PC-3 (cell line): ENCODE measurements at regions of chr19 and their contacts with region 1.

Region 1: DNA sequence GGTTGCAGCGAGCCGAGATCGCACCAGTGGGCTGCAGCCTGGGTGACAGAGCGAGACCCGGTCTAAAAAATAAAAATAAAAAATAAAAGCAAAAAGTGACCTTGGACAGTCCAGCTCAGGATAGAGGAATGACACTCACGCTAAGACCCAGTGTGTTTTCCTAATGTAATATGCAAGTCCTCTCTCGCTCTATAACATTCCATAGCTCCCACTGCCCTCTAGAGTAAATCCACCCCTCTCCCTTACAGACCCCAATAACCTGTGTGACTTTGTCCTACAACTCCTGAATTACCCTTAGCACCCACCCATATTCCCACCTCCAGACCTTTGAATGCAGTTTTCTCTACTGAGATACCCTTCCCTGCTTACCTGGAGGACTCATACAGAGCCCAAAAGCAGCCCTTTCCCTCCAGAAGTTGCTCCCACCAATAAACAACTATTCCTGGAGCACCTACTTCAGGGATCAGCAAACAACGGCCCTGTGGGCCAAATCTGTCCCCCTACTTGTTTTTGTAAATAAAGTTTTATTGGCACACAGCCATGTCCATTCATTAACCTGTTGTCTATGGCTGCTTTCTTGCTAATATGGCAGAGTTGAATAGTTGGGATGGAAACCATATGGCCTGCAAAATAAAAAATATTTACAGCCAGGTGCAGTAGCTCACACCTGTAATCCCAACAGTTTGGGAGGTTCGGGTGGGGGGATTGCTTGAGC is 39.8 kb upstream of the PTPRS start:
- DNase-seq: no peak
- ATAC-seq: no peak
- H3K4me3 ChIP-seq: no peak overlapping the region
- H3K27ac ChIP-seq: no peak overlapping the region
- H3K4me1 ChIP-seq: no peaks in the 10 kb centered on the region
- H3K27me3 ChIP-seq: no peaks in the 10 kb centered on the region
- CTCF ChIP-seq: no peak

Region 2: DNA sequence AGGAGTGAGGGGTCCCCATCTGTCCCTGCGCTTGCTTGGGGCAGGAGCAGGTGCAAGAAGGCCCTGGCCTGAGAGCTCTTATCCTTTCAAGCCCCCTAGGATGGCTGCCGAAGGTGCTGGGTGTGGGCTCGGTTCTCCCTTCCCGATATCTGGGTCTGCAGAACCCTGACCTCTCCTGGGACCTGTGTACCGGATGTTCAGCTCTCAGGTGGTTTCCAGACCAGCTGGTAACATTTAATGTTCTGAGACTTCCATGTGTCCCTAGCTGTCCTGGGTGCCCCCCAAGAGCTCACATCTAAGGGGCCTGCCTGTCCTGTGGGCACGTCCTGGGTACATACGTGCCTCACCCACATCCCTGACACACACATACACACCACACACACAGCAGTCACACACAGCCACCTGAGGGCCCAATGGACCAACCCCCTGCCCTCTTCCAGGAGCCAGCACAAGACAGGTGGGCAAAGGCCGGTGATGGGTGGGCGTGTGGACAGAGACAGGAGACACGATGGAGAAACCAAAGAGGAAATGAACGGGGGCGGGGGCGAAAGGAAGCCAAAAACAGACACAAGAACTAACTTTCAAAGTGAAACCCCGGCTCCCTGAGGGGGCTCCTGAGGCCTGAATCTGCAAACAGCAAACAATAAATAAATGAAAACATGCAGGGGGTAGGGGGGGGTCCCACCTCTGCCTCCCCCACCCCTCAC is 164.1 kb before region 1 on chr19:
- CTCF ChIA-PET with region 1: no interaction called
- POLR2A ChIA-PET with region 1: no interaction called
- intact Hi-C with region 1: no loop called
- DNase-seq: no peak
- ATAC-seq: no peak
- H3K4me3 ChIP-seq: no peak overlapping the region
- H3K27ac ChIP-seq: no peak overlapping the region
- H3K4me1 ChIP-seq: no peaks in the 10 kb centered on the region
- H3K27me3 ChIP-seq: no peaks in the 10 kb centered on the region
- CTCF ChIP-seq: no peak

Region 3: DNA sequence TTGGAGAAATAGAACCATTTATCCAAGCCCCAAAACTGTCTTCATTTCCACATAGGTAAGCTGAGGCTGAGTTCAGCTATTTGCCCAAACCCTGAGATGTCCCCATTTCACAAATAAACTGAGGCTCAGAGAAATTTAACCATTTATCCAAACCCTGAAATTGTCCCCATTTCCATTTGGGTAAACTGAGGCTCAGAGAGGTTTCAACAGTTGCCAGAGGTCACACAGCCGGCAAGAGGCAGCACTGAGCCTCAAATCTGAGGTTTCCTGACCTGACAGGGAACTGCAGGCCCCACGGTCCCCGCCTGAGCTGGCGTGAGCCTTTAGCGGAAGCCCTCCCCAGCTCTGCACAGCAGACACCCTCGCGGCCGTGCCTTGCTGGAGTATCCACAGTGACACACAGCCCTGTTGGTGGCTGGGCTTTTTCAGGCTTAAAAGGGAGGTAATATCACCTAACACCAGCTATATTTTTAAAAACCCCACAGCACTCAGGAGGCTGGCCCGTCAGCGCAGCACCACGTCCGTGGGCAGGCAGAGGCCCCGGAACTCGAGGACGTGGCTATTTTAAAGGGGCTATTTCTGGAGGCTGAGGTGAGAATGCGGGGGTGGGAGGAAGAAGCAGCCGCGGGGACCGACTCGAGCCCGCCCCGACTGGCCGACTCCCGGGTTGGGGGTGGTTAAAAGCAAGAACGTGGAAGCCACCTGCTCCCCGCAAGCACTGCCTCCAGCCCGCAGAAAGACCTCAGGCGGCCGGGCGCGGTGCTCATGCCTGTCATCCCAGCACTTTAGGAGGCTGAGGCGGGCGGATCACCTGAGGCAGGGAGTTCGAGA is 58.3 kb before region 1 on chr19:
- CTCF ChIA-PET with region 1: no interaction called
- POLR2A ChIA-PET with region 1: no interaction called
- intact Hi-C with region 1: no loop called
- DNase-seq: no peak
- ATAC-seq: no peak
- H3K4me3 ChIP-seq: no peak overlapping the region
- H3K27ac ChIP-seq: no peak overlapping the region
- H3K4me1 ChIP-seq: no peaks in the 10 kb centered on the region
- H3K27me3 ChIP-seq: no peaks in the 10 kb centered on the region
- CTCF ChIP-seq: no peak

Region 4: GRCh38 chr19:5394551-5395505 is 14.5 kb after region 1 on chr19:
- CTCF ChIA-PET with region 1: no interaction called
- POLR2A ChIA-PET with region 1: interaction called, 10 read pairs
- intact Hi-C with region 1: no loop called
- DNase-seq: no peak
- ATAC-seq: no peak
- H3K4me3 ChIP-seq: no peak overlapping the region
- H3K27ac ChIP-seq: no peak overlapping the region
- H3K4me1 ChIP-seq: no peaks in the 10 kb centered on the region
- H3K27me3 ChIP-seq: peaks cover 75% of the 10 kb centered on the region
- CTCF ChIP-seq: no peak